Caco-2 (cell line): ENCODE measurements at regions of chr17 and their contacts with region 1.

Region 1: DNA sequence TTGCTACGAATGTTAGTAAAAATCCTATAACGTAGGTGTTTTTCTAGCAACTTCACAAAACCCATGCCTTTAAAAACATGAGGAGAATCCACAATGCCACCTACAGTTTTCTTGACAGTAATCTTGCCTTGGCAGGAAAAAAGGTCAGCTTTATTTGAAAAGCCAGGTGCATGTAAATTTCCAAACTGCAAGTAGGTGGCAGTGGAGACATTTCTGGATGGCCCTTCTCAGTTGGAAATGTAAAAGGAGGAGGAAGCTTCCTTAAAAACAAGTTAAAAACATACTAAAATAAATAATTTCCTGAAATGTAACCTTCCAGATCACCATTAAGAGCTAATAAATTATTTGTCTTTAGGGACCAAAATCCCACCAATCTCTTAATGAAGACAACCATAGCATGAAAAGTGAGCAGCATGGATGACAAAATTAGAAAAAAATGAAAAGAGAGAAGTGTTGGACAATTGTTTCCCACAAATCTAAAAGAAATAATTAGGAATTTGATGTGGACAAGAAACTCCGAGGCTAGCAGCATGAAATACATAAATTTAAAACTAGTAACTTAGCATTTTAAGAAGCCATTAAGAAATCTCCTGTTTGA is 152.2 kb downstream of the SNX11 start:
- DNase-seq: peak in 1 of 2 experiments; percentile 70
- H3K4me3 ChIP-seq: no peak overlapping the region
- H3K4me3 Mint-ChIP-seq: no peak overlapping the region
- H3K27ac Mint-ChIP-seq: no peak overlapping the region
- H3K4me1 ChIP-seq: peaks cover 33% of the 10 kb centered on the region
- H3K4me1 Mint-ChIP-seq: peaks cover 34% of the 10 kb centered on the region
- H3K27me3 ChIP-seq: no peaks in the 10 kb centered on the region
- H3K27me3 Mint-ChIP-seq: no peaks in the 10 kb centered on the region
- CTCF ChIP-seq: peak; percentile 95 to 97

Region 2: DNA sequence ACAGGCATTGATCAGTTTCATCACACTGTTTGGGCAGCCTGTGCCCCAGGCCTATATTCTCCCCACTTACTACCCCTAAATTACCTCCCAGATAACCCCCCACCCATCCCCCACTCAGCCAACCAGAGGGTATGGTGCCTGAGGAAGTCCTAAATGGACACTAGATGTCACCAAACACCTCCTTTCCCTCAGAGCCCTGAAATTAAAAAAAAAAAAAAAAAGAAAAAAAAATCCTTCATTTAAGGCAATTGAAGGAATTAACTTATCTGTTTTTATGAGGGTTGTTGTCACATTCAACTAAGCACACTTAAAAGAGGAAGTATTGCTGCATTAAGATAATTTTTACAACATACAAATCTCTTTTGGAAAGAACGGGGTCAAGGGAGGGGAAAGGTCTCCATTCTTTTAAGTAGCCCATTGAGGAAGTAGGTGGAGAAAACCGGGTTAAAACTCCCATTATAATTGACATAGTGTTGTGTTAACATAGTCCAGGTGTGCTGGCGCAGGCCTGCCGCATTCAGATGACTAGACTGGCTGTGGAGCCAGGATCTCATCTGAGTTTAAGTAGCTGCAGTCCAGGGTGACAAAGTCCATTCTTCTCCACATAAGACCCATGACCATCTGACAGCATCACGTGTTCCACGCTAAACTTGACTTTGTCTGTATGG is 106.0 kb before region 1 on chr17:
- CTCF ChIA-PET with region 1: interaction called, 4 read pairs
- POLR2A ChIA-PET with region 1: no interaction called
- intact Hi-C with region 1: loop called (anchors 1 kb)
- DNase-seq: peak; percentile 80 to 88
- H3K4me3 ChIP-seq: no peak overlapping the region
- H3K4me3 Mint-ChIP-seq: peak overlapping the region; percentile 28
- H3K27ac Mint-ChIP-seq: no peak overlapping the region
- H3K4me1 ChIP-seq: peaks cover 10% of the 10 kb centered on the region
- H3K4me1 Mint-ChIP-seq: peaks cover 14% of the 10 kb centered on the region
- H3K27me3 ChIP-seq: peaks cover 2% of the 10 kb centered on the region; the same call in 1 of the 2 replicates
- H3K27me3 Mint-ChIP-seq: peaks cover 15% of the 10 kb centered on the region
- CTCF ChIP-seq: peak; percentile 88 to 93

Region 3: DNA sequence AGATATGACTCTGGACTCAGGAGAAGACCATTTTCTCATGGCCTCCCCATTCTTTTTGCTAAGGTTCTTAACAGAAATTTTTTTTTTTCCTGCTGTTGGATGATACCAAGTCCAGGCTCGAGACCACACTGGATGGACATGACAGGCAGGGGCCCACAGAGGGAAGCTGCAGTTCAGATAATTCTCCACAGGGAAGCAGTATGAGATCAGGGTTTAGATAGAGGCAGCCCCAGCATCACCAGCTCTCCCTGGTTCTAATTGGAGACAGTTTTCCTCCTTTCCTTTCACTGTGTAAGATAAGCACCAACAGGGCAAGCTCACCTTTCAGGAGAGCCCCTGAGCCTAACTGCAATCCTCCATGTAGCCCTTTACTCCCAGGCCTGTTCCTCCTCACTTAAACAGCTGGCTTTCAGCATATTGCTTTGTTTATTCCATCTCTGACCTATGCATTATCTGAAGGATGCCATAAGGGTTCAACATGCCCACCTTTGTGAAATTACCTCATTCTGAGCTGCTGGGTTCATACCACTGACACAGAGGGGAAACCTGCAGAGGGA is 44.1 kb before region 1 on chr17:
- CTCF ChIA-PET with region 1: interaction called, 44 read pairs
- POLR2A ChIA-PET with region 1: no interaction called
- intact Hi-C with region 1: loop called (anchors 1 kb)
- DNase-seq: peak; percentile 79 to 86
- H3K4me3 ChIP-seq: no peak overlapping the region
- H3K4me3 Mint-ChIP-seq: no peak overlapping the region
- H3K27ac Mint-ChIP-seq: no peak overlapping the region
- H3K4me1 ChIP-seq: peaks cover 9% of the 10 kb centered on the region; the same call in 1 of the 2 replicates
- H3K4me1 Mint-ChIP-seq: peaks cover 5% of the 10 kb centered on the region
- H3K27me3 ChIP-seq: no peaks in the 10 kb centered on the region
- H3K27me3 Mint-ChIP-seq: no peaks in the 10 kb centered on the region
- CTCF ChIP-seq: peak; percentile 97 to 98

Region 4: DNA sequence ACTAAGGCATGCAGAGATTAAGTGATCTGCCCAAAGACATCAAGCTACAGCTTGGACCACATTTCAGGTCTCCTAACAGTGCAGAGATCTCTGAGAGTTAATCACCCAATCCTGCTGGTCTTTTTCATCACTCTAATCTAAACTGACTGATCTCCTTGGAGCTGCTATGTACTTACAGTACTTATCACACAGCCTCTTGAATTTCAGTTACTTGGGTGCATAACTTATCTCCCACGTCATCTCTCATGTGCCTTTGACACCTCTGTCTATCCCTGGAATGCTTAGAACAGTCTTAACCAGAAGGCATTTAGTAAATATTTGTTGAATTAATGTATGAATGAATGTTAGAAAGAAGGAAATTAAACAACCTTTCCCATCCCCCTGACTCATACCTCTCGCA is 13.2 kb before region 1 on chr17:
- CTCF ChIA-PET with region 1: interaction called, 88 read pairs
- POLR2A ChIA-PET with region 1: interaction called, 6 read pairs
- intact Hi-C with region 1: loop called (anchors 1 kb)
- DNase-seq: peak; percentile 64 to 73
- H3K4me3 ChIP-seq: no peak overlapping the region
- H3K4me3 Mint-ChIP-seq: peak overlapping the region; percentile 38
- H3K27ac Mint-ChIP-seq: peak overlapping the region; percentile 37
- H3K4me1 ChIP-seq: peaks cover 65% of the 10 kb centered on the region
- H3K4me1 Mint-ChIP-seq: peaks cover 59% of the 10 kb centered on the region
- H3K27me3 ChIP-seq: no peaks in the 10 kb centered on the region
- H3K27me3 Mint-ChIP-seq: no peaks in the 10 kb centered on the region
- CTCF ChIP-seq: no peak

Region 5: DNA sequence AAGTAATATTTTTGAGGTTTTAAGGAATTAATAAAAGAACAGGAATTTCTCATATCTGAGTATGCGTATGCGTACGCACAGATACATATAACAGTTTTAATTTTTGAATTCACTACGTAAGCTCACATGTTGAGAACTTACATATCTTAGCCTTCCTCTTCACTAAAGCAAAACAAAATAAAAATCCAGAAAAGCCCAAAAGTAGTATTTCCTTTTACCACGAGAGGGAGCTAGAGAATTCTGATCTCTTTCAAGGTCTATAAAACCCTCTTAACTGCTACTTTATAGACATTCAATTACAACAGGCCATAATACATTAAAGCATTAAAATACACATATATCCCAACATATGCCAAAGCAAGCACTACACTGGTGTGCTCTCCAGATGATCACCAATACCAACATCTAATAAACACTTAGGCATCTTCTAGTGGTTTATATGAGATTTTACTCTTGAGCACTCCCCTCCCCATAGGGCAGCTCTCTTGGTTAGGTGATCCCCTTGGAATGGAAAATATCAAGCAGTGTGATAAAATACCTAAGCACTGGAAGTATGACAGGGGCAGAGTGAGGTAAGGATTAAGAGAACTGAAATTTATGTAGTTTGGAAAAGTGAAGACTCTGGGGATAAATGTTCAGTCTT is 76.2 kb after region 1 on chr17:
- CTCF ChIA-PET with region 1: interaction called, 9 read pairs
- POLR2A ChIA-PET with region 1: no interaction called
- intact Hi-C with region 1: loop called (anchors 1 kb)
- DNase-seq: peak in 1 of 2 experiments; percentile 79
- H3K4me3 ChIP-seq: no peak overlapping the region
- H3K4me3 Mint-ChIP-seq: no peak overlapping the region
- H3K27ac Mint-ChIP-seq: no peak overlapping the region
- H3K4me1 ChIP-seq: no peaks in the 10 kb centered on the region
- H3K4me1 Mint-ChIP-seq: no peaks in the 10 kb centered on the region
- H3K27me3 ChIP-seq: no peaks in the 10 kb centered on the region; the same call in 1 of the 2 replicates
- H3K27me3 Mint-ChIP-seq: peaks cover 18% of the 10 kb centered on the region
- CTCF ChIP-seq: peak; percentile 90 to 96

Region 6: GRCh38 chr17:48457080-48457836 is 197.5 kb after region 1 on chr17:
- CTCF ChIA-PET with region 1: no interaction called
- POLR2A ChIA-PET with region 1: no interaction called
- intact Hi-C with region 1: loop called (anchors 5 kb)
- DNase-seq: peak; percentile 80 to 90
- H3K4me3 ChIP-seq: peak overlapping the region; percentile 17
- H3K4me3 Mint-ChIP-seq: peak overlapping the region; percentile 69
- H3K27ac Mint-ChIP-seq: peak overlapping the region; percentile 31
- H3K4me1 ChIP-seq: peaks cover 18% of the 10 kb centered on the region
- H3K4me1 Mint-ChIP-seq: peaks cover 19% of the 10 kb centered on the region
- H3K27me3 ChIP-seq: no peaks in the 10 kb centered on the region; the same call in 1 of the 2 replicates
- H3K27me3 Mint-ChIP-seq: peaks cover 16% of the 10 kb centered on the region
- CTCF ChIP-seq: peak; percentile 100